Activated B cell treated with CpG ODN at 0.5 μM for 24 hours (primary cell): ENCODE measurements at regions of chr13 and their contacts with region 1.

Region 1: DNA sequence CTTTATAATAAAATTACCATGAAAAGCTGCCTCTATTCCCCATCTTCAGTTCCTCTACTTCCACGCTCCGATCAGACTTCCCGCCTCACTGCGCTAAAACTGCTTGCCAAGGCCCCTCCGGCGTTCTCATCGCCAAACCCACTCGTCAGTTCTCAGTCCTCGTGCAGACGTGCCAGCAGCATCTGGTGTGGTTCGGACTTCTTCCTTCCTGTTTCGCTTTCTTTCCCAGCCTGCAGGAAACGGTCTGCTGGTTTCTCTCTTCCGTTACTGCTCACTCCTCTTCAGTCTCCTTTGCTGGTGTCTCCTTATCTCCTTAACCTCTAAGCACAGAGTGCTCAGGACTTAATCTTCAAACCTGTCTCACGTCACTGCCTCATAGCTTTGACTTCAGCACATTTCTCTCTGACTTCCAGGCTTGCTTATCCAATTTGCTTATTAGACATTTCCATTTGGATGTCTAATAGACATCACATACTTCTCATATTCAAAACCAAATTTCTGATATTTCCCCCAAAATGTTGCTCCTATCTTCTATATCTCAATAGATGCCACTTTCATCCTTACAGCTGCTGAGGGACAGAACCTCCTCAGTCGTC is 40.3 kb downstream of the RCBTB2 start:
- DNase-seq: peak; percentile 60
- ATAC-seq: peak; percentile 89
- H3K4me3 Mint-ChIP-seq: no peak overlapping the region
- H3K27ac Mint-ChIP-seq: no peak overlapping the region
- H3K4me1 Mint-ChIP-seq: peaks cover 34% of the 10 kb centered on the region
- H3K27me3 Mint-ChIP-seq: no peaks in the 10 kb centered on the region
- CTCF ChIP-seq: no peak

Region 2: DNA sequence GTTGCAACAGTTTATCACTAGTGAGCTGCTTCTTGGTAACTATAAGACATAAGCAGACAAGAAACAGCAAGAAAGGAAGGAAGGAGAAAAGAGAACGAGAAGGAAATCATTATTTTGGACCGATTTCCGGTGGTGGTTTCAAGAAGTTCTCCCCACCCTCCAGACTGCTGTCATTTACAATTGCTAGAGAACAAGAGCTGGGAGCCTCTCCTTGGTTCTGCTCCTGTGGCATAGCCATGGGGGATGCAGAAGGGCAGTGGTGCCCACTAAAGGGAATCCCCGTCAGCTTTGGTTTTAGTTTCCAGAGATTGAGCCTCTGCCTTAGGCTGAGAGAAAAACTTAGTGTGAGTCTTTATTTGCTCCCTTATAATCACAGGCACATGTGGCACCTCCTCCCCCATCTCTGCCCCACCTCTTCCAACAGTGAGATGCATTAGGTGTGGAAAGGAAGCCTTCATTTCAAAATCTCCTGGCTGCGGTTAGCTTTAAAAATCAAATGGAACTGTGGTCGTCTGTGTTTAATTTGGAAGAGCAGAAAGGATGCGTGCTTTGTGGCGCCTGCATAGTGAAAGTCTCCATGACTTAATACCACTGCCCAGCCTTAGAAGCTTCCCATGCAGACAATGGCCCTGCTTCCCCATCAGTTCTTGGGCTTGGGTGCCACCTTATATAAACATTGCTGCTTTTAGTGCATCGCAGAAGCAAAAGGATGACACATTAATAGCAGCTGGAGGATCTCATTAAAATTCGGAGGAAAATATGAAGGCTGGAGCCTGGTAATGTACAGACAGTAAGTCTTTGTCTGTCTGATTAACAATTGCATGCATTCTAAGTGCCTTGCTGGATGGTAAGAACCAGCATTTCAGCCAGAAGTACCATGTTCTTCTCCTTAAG is 1914.6 kb before region 1 on chr13:
- CTCF ChIA-PET with region 1: no interaction called
- POLR2A ChIA-PET with region 1: no interaction called
- intact Hi-C with region 1: no loop called
- DNase-seq: no peak
- ATAC-seq: peak; percentile 41
- H3K4me3 Mint-ChIP-seq: peak overlapping the region; percentile 65
- H3K27ac Mint-ChIP-seq: peak overlapping the region; percentile 90
- H3K4me1 Mint-ChIP-seq: peaks cover 87% of the 10 kb centered on the region
- H3K27me3 Mint-ChIP-seq: no peaks in the 10 kb centered on the region
- CTCF ChIP-seq: no peak

Region 3: DNA sequence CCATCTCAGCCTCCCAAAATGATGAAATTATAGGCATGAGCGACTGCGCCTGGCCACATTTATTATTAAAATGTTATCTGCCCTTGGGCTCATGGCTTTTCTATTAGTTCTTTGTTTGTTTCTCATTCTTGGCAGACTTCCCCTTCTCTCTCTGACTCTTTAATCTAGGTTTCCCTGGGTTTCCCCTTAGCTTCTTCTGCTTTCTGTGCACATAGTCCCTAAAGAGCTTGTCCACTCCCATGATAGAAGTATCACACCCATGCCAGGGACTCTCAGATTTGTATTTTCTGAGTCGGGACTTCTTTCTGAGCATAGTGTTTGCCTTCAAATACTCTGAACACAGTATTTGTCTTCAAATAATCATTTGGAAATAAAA is 298.2 kb before region 1 on chr13:
- CTCF ChIA-PET with region 1: no interaction called
- POLR2A ChIA-PET with region 1: no interaction called
- intact Hi-C with region 1: loop called (anchors 5 kb)
- DNase-seq: no peak
- ATAC-seq: peak; percentile 98
- H3K4me3 Mint-ChIP-seq: peak overlapping the region; percentile 60
- H3K27ac Mint-ChIP-seq: peak overlapping the region; percentile 82
- H3K4me1 Mint-ChIP-seq: peaks cover 26% of the 10 kb centered on the region
- H3K27me3 Mint-ChIP-seq: peaks cover 4% of the 10 kb centered on the region
- CTCF ChIP-seq: no peak

Region 4: GRCh38 chr13:48505597-48506091 is 13.1 kb after region 1 on chr13:
- CTCF ChIA-PET with region 1: interaction called, 4 read pairs
- POLR2A ChIA-PET with region 1: interaction called, 20 read pairs
- intact Hi-C with region 1: loop called (anchors 1 kb)
- DNase-seq: no peak
- ATAC-seq: peak; percentile 85
- H3K4me3 Mint-ChIP-seq: peak overlapping the region; percentile 75
- H3K27ac Mint-ChIP-seq: peak overlapping the region; percentile 59
- H3K4me1 Mint-ChIP-seq: peaks cover 55% of the 10 kb centered on the region
- H3K27me3 Mint-ChIP-seq: peaks cover 20% of the 10 kb centered on the region
- CTCF ChIP-seq: no peak

Region 5: DNA sequence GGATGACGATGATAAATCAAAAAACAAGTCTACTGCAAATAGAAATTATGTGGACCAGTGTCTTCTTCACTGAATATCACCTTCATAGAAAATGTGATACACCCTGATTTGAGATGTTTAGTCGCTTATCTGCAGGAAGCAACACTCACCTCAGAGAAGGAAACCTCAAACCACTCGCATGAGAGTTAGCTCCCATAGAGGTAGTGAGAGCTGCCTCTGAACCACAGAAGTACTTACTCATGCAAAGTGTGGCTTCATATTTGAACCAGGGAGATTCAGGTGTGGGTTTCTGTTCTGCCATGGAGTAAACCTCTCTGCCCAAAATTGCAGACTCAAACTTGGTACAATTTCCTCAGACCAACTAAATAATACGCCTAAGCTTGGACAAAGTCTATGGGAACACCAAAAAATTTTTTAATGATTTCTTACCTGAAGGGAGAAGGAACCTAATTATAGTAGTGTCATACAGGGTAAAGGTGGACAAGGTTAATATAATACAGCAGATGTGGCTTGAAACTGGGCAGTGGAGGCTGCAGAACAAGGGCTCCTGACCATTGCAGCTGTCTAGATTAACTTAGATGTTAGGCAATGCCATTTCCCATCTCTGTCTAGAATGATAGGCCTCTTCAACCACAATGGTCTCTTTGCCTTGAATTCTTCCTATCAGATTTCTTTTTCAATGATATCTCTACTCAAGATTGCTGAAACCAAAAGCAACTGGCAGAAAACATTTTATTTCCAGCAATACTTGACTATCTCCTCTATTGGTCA is 69.9 kb after region 1 on chr13:
- CTCF ChIA-PET with region 1: no interaction called
- POLR2A ChIA-PET with region 1: no interaction called
- intact Hi-C with region 1: loop called (anchors 1 kb)
- DNase-seq: no peak
- ATAC-seq: peak; percentile 99
- H3K4me3 Mint-ChIP-seq: no peak overlapping the region
- H3K27ac Mint-ChIP-seq: peak overlapping the region; percentile 57
- H3K4me1 Mint-ChIP-seq: peaks cover 24% of the 10 kb centered on the region
- H3K27me3 Mint-ChIP-seq: peaks cover 59% of the 10 kb centered on the region
- CTCF ChIP-seq: no peak

Region 6: DNA sequence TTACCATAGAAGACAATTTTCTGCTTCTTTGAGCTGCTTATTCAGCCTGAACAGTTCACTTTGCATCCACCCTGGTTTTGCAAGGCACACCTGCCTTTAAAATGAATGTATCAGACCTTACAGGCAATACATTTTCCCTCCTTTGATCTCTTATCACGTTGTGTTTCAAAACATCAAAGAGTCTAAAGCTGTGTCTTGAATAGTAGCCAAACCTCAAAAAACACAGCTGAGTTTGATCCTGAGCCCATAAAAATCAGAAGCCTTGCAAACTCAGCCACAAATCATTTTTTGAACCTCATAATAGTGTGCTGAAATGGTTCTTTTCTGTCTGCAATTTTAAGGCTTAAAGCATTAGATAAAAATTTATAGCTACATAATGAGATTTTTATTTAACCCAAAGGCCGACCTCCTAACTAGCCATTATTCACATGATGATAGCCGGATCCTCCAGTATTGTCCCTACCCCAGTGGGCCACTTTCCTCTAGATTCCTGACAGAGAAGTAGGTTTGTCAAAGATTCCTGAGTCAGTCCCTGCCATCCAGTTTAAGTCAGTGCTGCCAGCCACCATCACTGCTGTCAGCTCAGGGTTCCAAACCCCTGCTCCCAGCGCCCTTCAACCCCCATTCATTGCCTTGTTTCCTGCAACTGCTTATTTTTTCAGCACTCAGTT is 879.5 kb after region 1 on chr13:
- CTCF ChIA-PET with region 1: no interaction called
- POLR2A ChIA-PET with region 1: no interaction called
- intact Hi-C with region 1: no loop called
- DNase-seq: no peak
- ATAC-seq: peak; percentile 41
- H3K4me3 Mint-ChIP-seq: peak overlapping the region; percentile 9
- H3K27ac Mint-ChIP-seq: peak overlapping the region; percentile 53
- H3K4me1 Mint-ChIP-seq: peaks cover 67% of the 10 kb centered on the region
- H3K27me3 Mint-ChIP-seq: no peaks in the 10 kb centered on the region
- CTCF ChIP-seq: no peak